Aorta (tissue), 5 donors: ENCODE measurements at regions of chr17 and their contacts with region 1.

Region 1: GRCh38 chr17:11074451-11074850 is 166.6 kb upstream of the SHISA6 start:
- DNase-seq: no peak
- ATAC-seq: no peak
- H3K4me3 ChIP-seq: no peak overlapping the region
- H3K27ac ChIP-seq: no peak overlapping the region
- H3K4me1 ChIP-seq: no peaks in the 10 kb centered on the region
- H3K27me3 ChIP-seq: no peaks in the 10 kb centered on the region

Region 2: DNA sequence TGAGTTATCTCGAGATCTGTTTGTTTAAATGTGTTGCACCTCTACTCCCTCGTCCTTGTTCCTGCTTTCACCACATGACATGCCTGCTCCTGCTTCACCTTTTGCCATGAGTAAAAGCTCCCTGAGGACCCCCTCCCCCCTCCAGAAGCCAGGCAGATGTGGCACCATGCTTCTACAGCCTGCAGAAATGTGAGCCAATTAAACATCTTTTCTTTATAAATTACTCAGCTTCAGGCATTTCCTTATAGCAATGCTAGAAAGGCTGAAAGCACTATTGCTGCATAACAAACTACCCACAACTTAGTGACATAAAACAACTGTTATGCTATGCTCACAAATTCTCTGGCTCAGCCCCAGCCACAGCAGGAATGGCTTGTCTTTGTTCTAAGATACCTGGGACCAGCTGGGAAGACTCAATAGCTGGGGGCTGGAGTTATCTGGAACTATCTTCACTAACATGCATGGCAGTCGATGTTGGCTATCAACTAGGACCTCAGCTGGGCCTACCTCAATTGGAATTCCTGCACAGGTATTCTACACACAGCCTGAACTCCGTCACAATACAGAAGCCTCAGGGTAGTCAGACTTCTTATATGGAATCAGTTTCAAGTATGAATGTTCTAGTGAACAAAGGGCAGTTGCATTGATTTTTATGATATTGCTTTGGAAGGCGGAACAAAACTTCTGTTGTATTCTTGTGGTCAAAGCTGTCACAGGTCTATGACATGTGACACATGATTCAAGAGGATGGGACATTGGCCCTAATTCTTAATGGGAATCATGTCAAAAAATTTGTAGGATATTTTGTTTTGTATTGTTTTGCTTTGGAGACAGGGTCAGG is 50.6 kb before region 1 on chr17:
- intact Hi-C with region 1: no loop called
- DNase-seq: no peak
- ATAC-seq: no peak
- H3K4me3 ChIP-seq: no peak overlapping the region
- H3K27ac ChIP-seq: no peak overlapping the region
- H3K4me1 ChIP-seq: no peaks in the 10 kb centered on the region
- H3K27me3 ChIP-seq: no peaks in the 10 kb centered on the region

Region 3: DNA sequence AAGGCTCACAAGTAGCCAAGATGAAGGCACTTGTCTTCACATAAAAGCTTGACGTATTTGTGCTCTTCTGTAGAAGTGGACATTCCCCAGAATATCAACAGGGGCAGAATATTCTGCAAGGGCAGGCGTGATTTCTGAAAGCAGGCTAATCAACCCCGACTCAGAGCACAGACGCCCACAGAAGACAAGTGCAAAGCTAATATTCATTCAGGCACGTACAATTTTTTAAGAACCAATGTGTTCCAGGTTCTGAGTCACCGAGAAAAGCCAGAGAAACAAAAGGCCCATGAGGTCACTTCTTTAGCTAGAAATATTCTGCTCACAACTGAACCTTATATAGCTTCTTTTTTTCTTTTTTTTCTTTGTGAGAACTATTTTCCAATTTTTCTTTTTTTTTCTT is 645.4 kb after region 1 on chr17:
- intact Hi-C with region 1: loop called in 1 of 2 experiments (anchors 10 kb)
- DNase-seq: no peak
- ATAC-seq: peak; percentile 44
- H3K4me3 ChIP-seq: no peak overlapping the region
- H3K27ac ChIP-seq: no peak overlapping the region
- H3K4me1 ChIP-seq: no peaks in the 10 kb centered on the region
- H3K27me3 ChIP-seq: no peaks in the 10 kb centered on the region